ENCODE measurements at regions of chr10 and their contacts with region 1.

Region 1: GRCh38 chr10:17607603-17608332 is 9.4 kb downstream of the HACD1 start:
- DNase-seq: no peak
- ATAC-seq: peak; percentile 84

Region 2: DNA sequence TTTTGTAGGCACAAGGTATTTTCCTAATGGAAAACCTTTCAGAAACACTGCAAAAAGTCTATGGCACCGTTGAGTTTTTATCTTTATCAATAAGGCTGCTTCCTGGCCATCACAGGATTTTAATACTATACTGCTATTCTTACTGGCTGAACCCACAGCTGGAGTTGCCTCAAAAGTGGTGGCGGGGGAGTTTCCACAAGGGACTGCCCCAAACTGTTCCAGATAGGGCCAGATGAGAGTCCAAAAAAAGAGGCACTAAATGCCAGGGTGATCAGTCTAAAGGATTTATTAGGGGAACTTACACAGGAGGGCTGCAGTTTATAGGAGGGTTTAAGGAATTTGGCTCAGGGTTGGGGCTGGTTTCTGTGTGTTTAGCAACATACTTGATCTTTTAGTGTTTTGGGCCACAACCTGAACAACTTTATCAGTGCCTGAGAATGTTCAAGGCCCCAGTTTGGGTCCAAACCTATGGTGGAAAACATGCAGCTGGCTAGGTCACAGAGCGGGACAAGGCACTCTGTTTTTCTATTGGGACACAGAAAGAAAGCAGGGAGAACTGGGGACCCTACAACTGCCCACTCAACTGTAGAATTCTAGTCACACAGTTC is 77.6 kb after region 1 on chr10:
- intact Hi-C with region 1: no loop called
- DNase-seq: no peak
- ATAC-seq: no peak

Region 3: DNA sequence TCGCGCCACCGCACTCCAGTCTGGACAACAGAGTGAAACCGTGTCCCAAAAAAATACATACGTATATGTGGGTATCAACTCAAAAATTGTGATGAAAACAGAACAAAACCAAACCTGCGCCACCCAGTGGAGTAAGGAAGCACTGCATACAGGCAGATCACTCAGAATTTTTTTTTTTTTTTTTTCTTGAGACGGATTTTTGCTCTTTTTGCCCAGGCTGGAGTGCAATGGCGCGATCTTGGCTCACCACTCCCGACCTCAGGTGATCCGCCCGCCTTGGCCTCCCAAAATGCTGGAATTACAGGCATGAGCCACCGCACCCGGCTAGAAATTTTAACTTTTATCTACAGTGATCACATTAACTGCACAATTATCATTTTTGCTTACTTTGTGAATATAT is 135.2 kb after region 1 on chr10:
- intact Hi-C with region 1: loop called (anchors 5 kb)
- DNase-seq: peak; percentile 84
- ATAC-seq: peak; percentile 15